ENCODE measurements at regions of chr5 and their contacts with region 1.

Region 1: GRCh38 chr5:54985301-54986268 is at the start of gene ESM1:
- DNase-seq: no peak
- H3K4me3 ChIP-seq: no peak within 1 kb of the TSS
- H3K4me3 Mint-ChIP-seq: peak within 1 kb of the TSS in 6 of 8 donors; percentile 31 to 78 (median 60)
- H3K27ac ChIP-seq: no peak within 1 kb of the TSS
- H3K27ac Mint-ChIP-seq: peak within 1 kb of the TSS in 3 of 7 donors; percentile 32 to 65 (median 49)
- H3K4me1 ChIP-seq: peaks cover 41% of the 10 kb centered on the region
- H3K4me1 Mint-ChIP-seq: peaks cover 38 to 74% (median 54%) of the 10 kb centered on the region in 4 donors
- H3K27me3 ChIP-seq: no peaks in the 10 kb centered on the region
- H3K27me3 Mint-ChIP-seq: no peaks in the 10 kb centered on the region
- total RNA-seq, gene ESM1: 0.99 to 1.5 TPM

Region 2: DNA sequence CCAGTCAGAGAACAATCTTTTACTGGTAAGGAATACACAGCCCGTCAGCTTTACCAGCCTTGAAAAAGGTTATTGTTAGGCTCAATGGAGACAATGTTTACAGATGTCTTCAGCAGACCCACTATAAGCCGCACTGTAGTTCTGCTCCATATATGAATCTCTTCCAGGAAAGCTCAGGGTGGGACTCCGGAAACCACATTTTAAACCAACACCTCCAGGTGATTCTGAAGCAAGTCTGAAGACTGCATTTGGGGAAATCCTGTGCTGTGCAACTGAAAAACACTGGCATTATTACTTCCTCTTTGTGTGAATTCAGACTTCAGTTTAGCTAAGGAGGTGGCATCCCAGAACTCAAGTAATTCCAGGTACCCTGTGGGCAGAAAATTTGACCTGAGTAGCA is 42.0 kb after region 1 on chr5:
- CTCF ChIA-PET with region 1: no interaction called
- POLR2A ChIA-PET with region 1: interaction called, 10 read pairs
- intact Hi-C with region 1: loop called (anchors 5 kb)
- DNase-seq: peak; percentile 11 to 66 (median 24)
- H3K4me3 ChIP-seq: peak overlapping the region in 1 of 2 donors; percentile 4
- H3K4me3 Mint-ChIP-seq: peak overlapping the region; percentile 48 to 89 (median 72)
- H3K27ac ChIP-seq: peak overlapping the region; percentile 36
- H3K27ac Mint-ChIP-seq: peak overlapping the region; percentile 18 to 86 (median 77)
- H3K4me1 ChIP-seq: peaks cover 77% of the 10 kb centered on the region
- H3K4me1 Mint-ChIP-seq: peaks cover 51 to 95% (median 71%) of the 10 kb centered on the region in 4 donors
- H3K27me3 ChIP-seq: no peaks in the 10 kb centered on the region
- H3K27me3 Mint-ChIP-seq: no peaks in the 10 kb centered on the region